Activated T-helper 1 cell treated with anti-CD3 and anti-CD28 coated beads, Interleukin-12 subunit alpha, Interleukin-12 subunit beta, Interleukin-2, Interleukin-4 antibody, amounts not matched to agents 30 ng/mL and 10 ng/mL and 1 ng/mL, durations not matched to agents 14 hours and 24 hours and 36 hours (primary cell): ENCODE measurements at regions of chr10 and their contacts with region 1.

Region 1: DNA sequence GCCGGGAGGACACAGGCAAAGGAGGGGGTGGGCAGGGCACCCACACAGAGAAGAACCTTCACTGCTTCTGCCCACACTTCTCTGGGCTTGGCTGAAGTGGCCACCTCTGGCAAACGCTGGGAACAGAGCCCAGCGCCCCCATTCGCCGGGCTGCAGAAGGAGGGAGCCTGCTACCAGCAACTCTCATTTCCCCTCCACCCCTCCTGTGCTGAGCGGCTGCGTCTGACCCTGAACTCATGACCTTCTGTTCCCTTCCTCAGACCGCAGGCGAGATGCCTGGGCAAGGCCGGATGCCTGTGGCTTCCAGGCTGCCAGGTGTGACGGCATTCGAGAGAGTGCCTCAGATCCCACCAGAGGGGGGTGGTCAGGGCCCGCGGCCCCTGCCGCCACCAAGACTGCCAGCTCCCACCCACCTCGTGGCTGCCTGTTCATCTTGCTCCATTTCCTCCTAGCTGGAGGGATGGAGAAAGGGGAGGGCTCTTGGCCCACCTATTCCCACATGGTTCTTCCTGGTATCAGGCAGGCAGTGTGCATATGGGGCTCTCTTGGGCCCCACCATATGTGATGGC is 19.8 kb downstream of the DNAJB12 start:
- DNase-seq: peak; percentile 84
- H3K4me3 Mint-ChIP-seq: peak overlapping the region; percentile 70
- H3K27ac Mint-ChIP-seq: peak overlapping the region; percentile 91
- H3K4me1 Mint-ChIP-seq: peaks cover 72% of the 10 kb centered on the region
- H3K27me3 Mint-ChIP-seq: no peaks in the 10 kb centered on the region

Region 2: DNA sequence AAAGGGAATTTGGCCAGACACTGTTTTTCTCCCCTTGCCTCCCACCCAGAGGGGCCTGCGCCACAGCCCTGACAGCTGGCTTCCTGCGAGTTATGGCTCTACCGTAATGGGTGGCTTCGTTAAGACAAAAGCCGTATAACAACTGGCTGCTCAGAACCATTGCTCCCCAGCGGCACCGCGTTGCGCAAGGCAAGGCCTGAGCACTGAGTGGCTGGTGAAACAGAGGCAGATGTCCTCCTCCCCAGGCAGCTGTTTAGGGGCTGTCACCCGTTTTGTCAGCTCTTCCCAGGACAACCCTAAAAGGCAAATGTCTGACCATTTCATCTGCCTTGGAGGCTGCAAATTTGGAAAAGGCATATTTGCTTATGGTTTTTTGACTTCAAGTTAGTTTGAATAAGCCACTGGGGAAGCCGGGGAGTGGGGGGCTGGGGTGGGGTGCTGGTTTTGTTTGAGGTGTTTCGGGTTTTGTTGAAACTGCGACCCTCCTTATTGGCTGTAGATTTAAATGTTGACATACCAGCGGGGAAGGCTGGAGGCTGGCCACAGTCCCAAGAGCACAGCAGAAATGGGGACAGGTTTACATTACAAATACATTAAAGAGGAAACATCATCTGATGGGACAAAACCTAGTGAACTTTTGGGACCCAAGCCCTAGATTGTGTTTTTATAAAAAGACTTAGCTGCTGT is 245.9 kb before region 1 on chr10:
- intact Hi-C with region 1: loop called (anchors 2 kb)
- DNase-seq: peak; percentile 47
- H3K4me3 Mint-ChIP-seq: peak overlapping the region; percentile 99
- H3K27ac Mint-ChIP-seq: peak overlapping the region; percentile 99
- H3K4me1 Mint-ChIP-seq: peaks cover 62% of the 10 kb centered on the region
- H3K27me3 Mint-ChIP-seq: no peaks in the 10 kb centered on the region

Region 3: GRCh38 chr10:72215652-72216549 is 119.0 kb before region 1 on chr10 and contains the starts of genes ANAPC16 and ASCC1:
- intact Hi-C with region 1: loop called (anchors 1 kb)
- DNase-seq: peak; percentile 94
- H3K4me3 Mint-ChIP-seq: peak within 1 kb of the TSS; percentile 98
- H3K27ac Mint-ChIP-seq: peak within 1 kb of the TSS; percentile 99
- H3K4me1 Mint-ChIP-seq: peaks cover 51% of the 10 kb centered on the region
- H3K27me3 Mint-ChIP-seq: peaks cover 2% of the 10 kb centered on the region
- total RNA-seq, gene ANAPC16: 80.0 and 81.6 TPM in 2 replicates
- total RNA-seq, gene ASCC1: 29.8 and 33.5 TPM in 2 replicates

Region 4: GRCh38 chr10:72248468-72249151 is 86.3 kb before region 1 on chr10:
- intact Hi-C with region 1: loop called (anchors 1 kb)
- DNase-seq: peak; percentile 75
- H3K4me3 Mint-ChIP-seq: peak overlapping the region; percentile 76
- H3K27ac Mint-ChIP-seq: peak overlapping the region; percentile 98
- H3K4me1 Mint-ChIP-seq: peaks cover 83% of the 10 kb centered on the region
- H3K27me3 Mint-ChIP-seq: no peaks in the 10 kb centered on the region

Region 5: DNA sequence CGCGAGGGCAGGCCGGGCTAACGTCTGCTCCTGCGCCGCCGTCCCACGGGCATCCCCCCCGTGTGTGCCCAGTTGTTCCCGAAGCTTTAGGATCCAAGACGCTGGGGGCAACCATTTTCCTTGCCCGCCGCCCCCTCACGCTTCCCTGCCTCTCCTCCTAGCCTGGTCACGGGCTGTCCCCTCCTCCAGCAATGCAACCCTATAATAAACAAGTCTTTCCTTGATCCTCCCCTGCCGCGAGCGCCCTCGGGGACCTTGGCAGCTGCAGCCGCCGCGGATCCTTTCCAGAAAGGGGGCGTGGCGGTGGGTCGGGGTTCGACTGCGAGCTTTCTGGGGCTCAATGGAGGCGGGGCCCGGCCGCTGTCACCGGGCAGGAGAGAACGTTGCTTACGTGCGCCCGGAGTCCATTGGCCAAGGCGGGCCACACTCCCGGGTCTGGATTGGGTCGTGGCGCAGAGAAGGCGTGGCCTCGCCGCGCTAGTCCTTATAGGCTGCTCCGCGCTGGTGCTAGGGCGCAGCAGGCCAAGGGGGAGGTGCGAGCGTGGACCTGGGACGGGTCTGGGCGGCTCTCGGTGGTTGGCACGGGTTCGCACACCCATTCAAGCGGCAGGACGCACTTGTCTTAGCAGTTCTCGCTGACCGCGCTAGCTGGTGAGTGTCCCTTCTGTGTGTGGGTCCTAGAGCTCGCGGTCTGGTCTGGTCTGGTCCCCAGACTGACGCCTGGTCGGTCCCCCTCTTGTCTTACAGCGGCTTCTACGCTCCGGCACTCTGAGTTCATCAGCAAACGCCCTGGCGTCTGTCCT is 61.3 kb before region 1 on chr10 and contains the start of gene DDIT4:
- intact Hi-C with region 1: loop called (anchors 1 kb)
- DNase-seq: peak; percentile 99
- H3K4me3 Mint-ChIP-seq: peak within 1 kb of the TSS; percentile 97
- H3K27ac Mint-ChIP-seq: peak within 1 kb of the TSS; percentile 97
- H3K4me1 Mint-ChIP-seq: peaks cover 56% of the 10 kb centered on the region
- H3K27me3 Mint-ChIP-seq: no peaks in the 10 kb centered on the region
- total RNA-seq, gene DDIT4: 178 and 183 TPM in 2 replicates

Region 6: GRCh38 chr10:72319416-72320254 is 15.3 kb before region 1 on chr10:
- intact Hi-C with region 1: loop called (anchors 1 kb)
- DNase-seq: peak; percentile 84
- H3K4me3 Mint-ChIP-seq: peak overlapping the region; percentile 80
- H3K27ac Mint-ChIP-seq: peak overlapping the region; percentile 98
- H3K4me1 Mint-ChIP-seq: peaks cover 70% of the 10 kb centered on the region
- H3K27me3 Mint-ChIP-seq: no peaks in the 10 kb centered on the region